Activated CD4-positive, alpha-beta memory T cell treated with anti-CD3 and anti-CD28 coated beads, Interleukin-2, amount 10 ng/mL, durations not matched to agents 7 days and 5 days (primary cell): ENCODE measurements at regions of chr9 and their contacts with region 1.

Region 1: GRCh38 chr9:98118640-98119601 is at the start of gene TRIM14:
- DNase-seq: peak; percentile 72
- H3K4me3 Mint-ChIP-seq: peak within 1 kb of the TSS; percentile 81
- H3K27ac Mint-ChIP-seq: peak within 1 kb of the TSS; percentile 90
- H3K4me1 Mint-ChIP-seq: peaks cover 49% of the 10 kb centered on the region
- H3K27me3 Mint-ChIP-seq: no peaks in the 10 kb centered on the region
- total RNA-seq, gene TRIM14: 99.4 to 101 TPM

Region 2: GRCh38 chr9:96844040-96844439 is 1274.9 kb before region 1 on chr9:
- CTCF ChIA-PET with region 1: no interaction called
- POLR2A ChIA-PET with region 1: no interaction called
- DNase-seq: no peak
- H3K4me3 Mint-ChIP-seq: no peak overlapping the region
- H3K27ac Mint-ChIP-seq: no peak overlapping the region
- H3K4me1 Mint-ChIP-seq: peaks cover 9% of the 10 kb centered on the region
- H3K27me3 Mint-ChIP-seq: no peaks in the 10 kb centered on the region

Region 3: GRCh38 chr9:98045234-98046179 is 73.4 kb before region 1 on chr9:
- CTCF ChIA-PET with region 1: interaction called, 3 read pairs
- POLR2A ChIA-PET with region 1: interaction called, 11 read pairs
- DNase-seq: peak; percentile 44
- H3K4me3 Mint-ChIP-seq: peak overlapping the region; percentile 79
- H3K27ac Mint-ChIP-seq: peak overlapping the region; percentile 82
- H3K4me1 Mint-ChIP-seq: peaks cover 49% of the 10 kb centered on the region
- H3K27me3 Mint-ChIP-seq: no peaks in the 10 kb centered on the region

Region 4: DNA sequence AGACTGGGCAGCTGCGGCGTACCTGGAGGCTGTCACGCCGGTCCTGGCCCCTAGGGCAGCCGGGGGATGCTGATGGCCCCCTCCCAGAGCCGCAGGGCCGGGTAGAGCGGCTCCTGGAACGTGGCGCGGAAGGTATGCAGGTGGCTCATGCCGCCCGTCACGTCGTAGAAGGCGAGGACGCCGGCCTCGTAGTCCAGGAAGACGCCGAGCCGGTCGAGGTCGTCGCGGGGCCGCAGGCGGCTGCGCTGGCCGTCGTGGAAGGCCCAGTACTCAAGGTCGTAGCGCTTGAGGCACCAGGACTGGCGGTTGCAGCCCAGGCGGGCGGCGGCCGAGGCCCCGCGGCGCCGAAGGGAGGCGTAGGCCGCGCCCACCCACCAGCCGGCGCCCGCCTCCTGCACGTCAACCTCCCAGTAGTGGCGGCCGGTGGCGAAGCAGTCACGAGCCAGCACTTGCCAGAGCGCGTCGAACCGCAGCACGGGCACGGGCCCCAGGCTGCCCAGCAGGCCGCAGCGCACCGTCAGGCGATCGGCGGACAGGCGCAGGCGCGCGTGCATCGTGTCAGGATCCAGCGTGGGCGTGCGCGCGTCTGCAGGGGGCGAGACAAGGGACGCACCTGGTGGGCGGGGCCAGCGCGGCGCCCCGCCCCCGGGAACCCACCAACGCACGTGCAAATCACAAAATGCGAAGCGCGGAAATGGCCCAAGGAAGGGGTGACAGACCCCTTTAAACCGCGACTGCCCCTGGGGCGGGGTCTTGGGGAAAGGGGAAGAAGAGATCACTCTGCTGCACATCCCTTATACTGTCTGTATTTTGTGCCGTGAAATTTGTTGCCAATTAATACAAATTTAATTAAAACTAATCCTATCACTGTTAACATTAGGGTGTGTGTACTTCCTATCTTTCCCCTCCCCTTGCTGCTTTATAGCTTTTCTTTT is 31.2 kb before region 1 on chr9:
- CTCF ChIA-PET with region 1: interaction called, 4 read pairs
- POLR2A ChIA-PET with region 1: interaction called, 14 read pairs
- DNase-seq: no peak
- H3K4me3 Mint-ChIP-seq: no peak overlapping the region
- H3K27ac Mint-ChIP-seq: no peak overlapping the region
- H3K4me1 Mint-ChIP-seq: peaks cover 31% of the 10 kb centered on the region
- H3K27me3 Mint-ChIP-seq: no peaks in the 10 kb centered on the region

Region 5: GRCh38 chr9:98108531-98109031 is 10.3 kb before region 1 on chr9:
- CTCF ChIA-PET with region 1: interaction called, 38 read pairs
- POLR2A ChIA-PET with region 1: interaction called, 221 read pairs
- DNase-seq: peak; percentile 31
- H3K4me3 Mint-ChIP-seq: peak overlapping the region; percentile 40
- H3K27ac Mint-ChIP-seq: peak overlapping the region; percentile 93
- H3K4me1 Mint-ChIP-seq: peaks cover 87% of the 10 kb centered on the region
- H3K27me3 Mint-ChIP-seq: no peaks in the 10 kb centered on the region

Region 6: DNA sequence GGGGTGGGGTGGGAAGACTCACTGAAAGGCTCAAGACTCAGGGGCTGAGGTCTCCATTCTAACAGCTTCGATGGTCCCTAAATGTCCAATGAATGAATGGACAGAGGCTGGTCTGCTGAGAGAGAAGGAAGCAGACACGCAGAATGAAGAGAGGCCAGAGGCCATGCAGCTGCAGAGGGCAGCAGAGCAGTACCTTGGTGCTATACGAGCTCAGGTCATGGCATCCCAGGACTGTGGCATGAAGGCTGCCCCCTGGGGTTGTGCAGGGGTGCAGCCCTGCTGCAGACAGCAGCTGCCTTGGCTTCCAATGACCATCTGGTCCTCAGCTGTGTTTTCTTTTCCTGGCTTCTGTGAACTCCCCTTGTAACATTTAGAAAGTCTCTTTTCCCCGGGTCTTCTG is 88.7 kb after region 1 on chr9:
- CTCF ChIA-PET with region 1: interaction called, 13 read pairs
- POLR2A ChIA-PET with region 1: interaction called, 3 read pairs
- DNase-seq: no peak
- H3K4me3 Mint-ChIP-seq: no peak overlapping the region
- H3K27ac Mint-ChIP-seq: no peak overlapping the region
- H3K4me1 Mint-ChIP-seq: peaks cover 3% of the 10 kb centered on the region
- H3K27me3 Mint-ChIP-seq: no peaks in the 10 kb centered on the region

Region 7: DNA sequence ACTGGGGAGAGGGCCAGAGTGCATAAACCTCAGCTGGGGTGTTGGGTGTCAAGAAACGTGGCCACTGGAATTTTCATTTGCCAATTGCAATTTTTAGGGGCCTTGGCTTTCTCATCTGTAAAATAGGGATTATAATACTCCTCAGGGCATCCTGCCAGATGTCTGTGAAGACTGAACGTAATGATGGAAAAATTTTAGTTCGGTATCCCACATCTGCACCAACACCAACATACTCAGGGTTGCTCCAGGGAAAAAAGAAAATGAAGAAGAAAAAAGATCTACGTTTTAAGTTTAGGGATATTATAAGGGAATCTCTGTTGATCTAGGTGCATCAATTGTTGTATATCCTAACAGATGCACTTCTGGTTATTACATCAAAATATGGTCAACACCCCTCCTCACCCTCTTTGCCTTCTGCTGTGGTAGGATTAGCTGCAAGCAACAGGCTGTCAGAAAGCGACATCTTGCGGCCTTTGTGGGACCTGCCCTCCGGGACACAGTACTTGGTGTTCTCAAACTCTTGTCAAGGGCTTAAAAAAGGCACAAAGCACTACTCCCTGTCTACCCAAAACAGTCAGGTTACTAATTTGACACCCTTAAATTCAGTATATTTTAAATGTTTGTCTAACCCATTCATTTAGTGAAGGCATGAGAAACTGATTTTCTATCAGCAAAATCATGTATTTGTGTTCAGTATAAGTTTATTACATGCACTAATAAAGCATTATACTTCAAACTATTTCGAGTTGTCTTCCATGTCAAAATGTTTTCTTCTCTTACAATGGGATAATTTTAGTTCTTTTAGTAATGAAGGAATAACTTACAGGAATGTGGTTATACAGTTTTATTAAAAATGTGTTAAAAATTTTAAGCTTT is 144.8 kb after region 1 on chr9:
- CTCF ChIA-PET with region 1: interaction called, 17 read pairs
- POLR2A ChIA-PET with region 1: interaction called, 6 read pairs
- DNase-seq: peak; percentile 88
- H3K4me3 Mint-ChIP-seq: no peak overlapping the region
- H3K27ac Mint-ChIP-seq: no peak overlapping the region
- H3K4me1 Mint-ChIP-seq: no peaks in the 10 kb centered on the region
- H3K27me3 Mint-ChIP-seq: peaks cover 25% of the 10 kb centered on the region